ENCODE measurements at regions of chr6 and their contacts with region 1.

Region 1: DNA sequence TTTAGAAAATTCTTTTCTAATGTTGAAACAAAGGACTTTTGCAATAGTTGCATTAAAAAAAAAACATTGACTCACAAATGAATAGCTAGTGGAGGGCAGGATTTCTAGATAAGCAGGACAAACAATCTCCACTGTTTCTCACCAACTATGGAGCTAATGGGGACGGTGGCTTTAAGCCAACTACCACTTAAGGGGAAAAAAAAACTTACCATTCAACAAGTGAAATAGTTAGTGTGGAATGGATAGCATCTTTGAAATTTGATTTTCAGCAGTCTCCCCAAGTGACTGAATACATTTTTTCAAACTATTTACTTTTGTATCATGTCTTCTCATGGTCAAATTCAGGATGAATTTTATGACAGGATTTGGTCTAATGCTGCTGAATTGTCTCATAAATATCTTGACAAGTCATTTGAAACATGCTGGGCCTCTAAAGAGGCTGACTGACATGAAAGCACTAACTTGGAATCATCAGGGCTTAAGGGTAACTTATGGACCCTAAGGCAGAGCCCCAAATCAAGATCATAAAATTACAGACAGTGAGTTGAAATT is 100.5 kb downstream of the EYA4 start:
- DNase-seq: peak; percentile 83
- ATAC-seq: peak; percentile 68
- H3K4me3 ChIP-seq: no peak overlapping the region
- H3K27ac ChIP-seq: peak overlapping the region; percentile 74
- H3K4me1 ChIP-seq: peaks cover 37% of the 10 kb centered on the region
- H3K27me3 ChIP-seq: no peaks in the 10 kb centered on the region
- CTCF ChIP-seq: no peak

Region 2: GRCh38 chr6:132962936-132963868 is 378.5 kb before region 1 on chr6:
- CTCF ChIA-PET with region 1: no interaction called
- POLR2A ChIA-PET with region 1: no interaction called
- intact Hi-C with region 1: no loop called
- DNase-seq: peak; percentile 80
- ATAC-seq: 0 out of 2 replicates have a peak, but pooled peaks have one; percentile 19
- H3K4me3 ChIP-seq: no peak overlapping the region
- H3K27ac ChIP-seq: peak overlapping the region; percentile 79
- H3K4me1 ChIP-seq: peaks cover 72% of the 10 kb centered on the region
- H3K27me3 ChIP-seq: no peaks in the 10 kb centered on the region
- CTCF ChIP-seq: peak; percentile 92

Region 3: GRCh38 chr6:133241086-133241900 is 100.4 kb before region 1 on chr6 and contains the start of gene EYA4:
- CTCF ChIA-PET with region 1: no interaction called
- POLR2A ChIA-PET with region 1: no interaction called
- intact Hi-C with region 1: loop called (anchors 5 kb)
- DNase-seq: peak; percentile 62
- ATAC-seq: peak; percentile 70
- H3K4me3 ChIP-seq: peak within 1 kb of the TSS; percentile 92
- H3K27ac ChIP-seq: peak within 1 kb of the TSS; percentile 62
- H3K4me1 ChIP-seq: peaks cover 47% of the 10 kb centered on the region
- H3K27me3 ChIP-seq: no peaks in the 10 kb centered on the region
- CTCF ChIP-seq: no peak
- total RNA-seq, gene EYA4: 10.0 and 11.6 TPM in 2 replicates